Ovary (tissue), 10 donors: ENCODE measurements at regions of chr4 and their contacts with region 1.

Region 1: GRCh38 chr4:108324450-108324849 is 155.7 kb upstream of the LEF1 start:
- DNase-seq: no peak
- H3K4me3 ChIP-seq: no peak overlapping the region
- H3K27ac ChIP-seq: no peak overlapping the region
- H3K4me1 ChIP-seq: no peaks in the 10 kb centered on the region
- H3K27me3 ChIP-seq: no peaks in the 10 kb centered on the region
- CTCF ChIP-seq: no peak
- EP300 ChIP-seq: no peak
- POLR2A ChIP-seq: no peak

Region 2: GRCh38 chr4:108135549-108136209 is 188.8 kb before region 1 on chr4:
- intact Hi-C with region 1: no loop called
- DNase-seq: no peak
- H3K4me3 ChIP-seq: no peak overlapping the region
- H3K27ac ChIP-seq: no peak overlapping the region
- H3K4me1 ChIP-seq: no peaks in the 10 kb centered on the region
- H3K27me3 ChIP-seq: no peaks in the 10 kb centered on the region
- CTCF ChIP-seq: no peak
- EP300 ChIP-seq: no peak
- POLR2A ChIP-seq: no peak

Region 3: DNA sequence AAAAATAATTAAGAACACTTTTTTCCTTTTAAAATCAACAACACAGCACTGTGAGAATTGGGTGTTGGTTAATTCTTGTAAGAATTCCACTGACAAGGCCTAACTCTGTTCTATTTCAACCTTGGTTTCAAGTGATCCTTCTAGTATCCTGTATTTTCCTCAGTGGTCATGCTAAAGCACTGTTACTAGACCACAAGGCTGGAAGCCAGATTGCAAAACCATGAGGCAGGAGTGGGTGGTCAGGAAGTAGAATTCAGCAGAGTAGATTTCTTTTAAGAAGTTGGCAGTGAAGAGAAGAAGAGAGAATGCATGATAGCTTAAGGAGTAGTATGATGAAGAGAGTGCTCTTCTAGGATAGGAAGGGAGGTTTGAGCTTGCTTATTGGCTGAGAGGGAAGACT is 84.1 kb before region 1 on chr4:
- intact Hi-C with region 1: no loop called
- DNase-seq: no peak
- H3K4me3 ChIP-seq: no peak overlapping the region
- H3K27ac ChIP-seq: no peak overlapping the region
- H3K4me1 ChIP-seq: no peaks in the 10 kb centered on the region
- H3K27me3 ChIP-seq: no peaks in the 10 kb centered on the region
- CTCF ChIP-seq: no peak
- EP300 ChIP-seq: no peak
- POLR2A ChIP-seq: no peak

Region 4: GRCh38 chr4:108350332-108350731 is 25.9 kb after region 1 on chr4:
- intact Hi-C with region 1: loop called in 1 of 4 experiments (anchors 1 kb)
- DNase-seq: no peak
- H3K4me3 ChIP-seq: no peak overlapping the region
- H3K27ac ChIP-seq: no peak overlapping the region
- H3K4me1 ChIP-seq: no peaks in the 10 kb centered on the region
- H3K27me3 ChIP-seq: no peaks in the 10 kb centered on the region
- CTCF ChIP-seq: no peak
- EP300 ChIP-seq: no peak
- POLR2A ChIP-seq: no peak